ENCODE measurements at regions of chr17 and their contacts with region 1.

Region 1: DNA sequence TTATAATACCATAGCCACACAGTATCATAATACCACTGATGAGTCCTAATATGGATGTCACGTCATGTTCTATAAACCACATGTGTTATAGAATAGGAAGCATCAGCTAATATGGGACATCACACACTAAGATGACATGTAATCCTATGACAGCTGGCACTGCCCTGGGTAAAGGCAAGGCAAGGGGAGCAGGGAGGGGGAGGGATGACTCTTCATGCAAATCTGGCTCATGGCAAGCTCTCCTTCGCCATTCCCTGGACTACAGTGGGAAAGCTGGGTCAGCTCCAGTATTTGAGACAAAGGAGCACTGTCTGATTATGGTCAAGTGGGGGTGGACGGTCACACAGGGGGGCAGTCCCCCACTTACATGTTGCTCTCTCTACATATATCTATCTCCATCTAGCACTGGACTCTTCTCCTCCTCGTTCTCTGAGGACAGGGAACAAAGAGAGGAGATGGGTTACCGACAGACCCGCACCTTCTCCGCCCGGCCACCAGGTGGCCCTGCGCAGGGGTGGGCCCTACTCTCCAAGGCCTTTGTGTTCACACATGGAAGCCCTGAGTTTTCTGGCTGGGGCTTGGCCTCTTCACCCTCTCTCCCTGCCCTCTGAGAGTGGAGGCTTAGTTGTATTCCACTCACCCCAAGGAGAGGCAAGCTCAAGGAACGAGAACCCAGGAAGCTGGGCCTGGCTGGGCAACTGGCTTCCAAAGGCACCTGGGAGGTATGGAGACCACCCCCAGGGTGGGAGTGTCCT is 23.4 kb upstream of the MPO start:
- DNase-seq: peak; percentile 51
- H3K4me3 ChIP-seq: no peak overlapping the region
- H3K27ac ChIP-seq: no peak overlapping the region
- H3K4me1 ChIP-seq: no peaks in the 10 kb centered on the region
- H3K27me3 ChIP-seq: no peaks in the 10 kb centered on the region
- CTCF ChIP-seq: peak; percentile 64 to 74 (median 69)
- EP300 ChIP-seq: no peak
- POLR2A ChIP-seq: no peak

Region 2: DNA sequence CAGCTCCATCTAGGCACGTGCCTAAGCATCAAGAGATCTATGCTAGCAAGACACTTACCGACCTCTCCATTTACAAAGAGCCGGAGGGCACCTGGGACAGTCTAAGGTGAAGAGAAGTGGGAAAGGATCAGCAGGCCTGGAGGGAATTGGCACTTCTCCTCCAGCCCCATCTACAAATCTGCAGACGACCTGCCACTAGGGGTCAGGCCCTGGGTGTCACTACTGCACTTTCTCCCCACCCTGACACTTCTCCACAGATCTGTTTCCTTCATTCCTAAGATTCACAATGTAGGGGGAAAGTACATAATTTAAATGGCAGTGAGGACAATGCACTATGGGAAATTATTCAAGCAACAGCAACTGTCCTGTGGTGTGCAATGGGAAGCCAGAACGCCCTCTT is 93.2 kb before region 1 on chr17:
- in situ Hi-C with region 1: no loop called
- intact Hi-C with region 1: no loop called
- DNase-seq: no peak
- H3K4me3 ChIP-seq: no peak overlapping the region
- H3K27ac ChIP-seq: no peak overlapping the region
- H3K4me1 ChIP-seq: no peaks in the 10 kb centered on the region
- H3K27me3 ChIP-seq: no peaks in the 10 kb centered on the region
- CTCF ChIP-seq: no peak
- EP300 ChIP-seq: no peak
- POLR2A ChIP-seq: no peak

Region 3: DNA sequence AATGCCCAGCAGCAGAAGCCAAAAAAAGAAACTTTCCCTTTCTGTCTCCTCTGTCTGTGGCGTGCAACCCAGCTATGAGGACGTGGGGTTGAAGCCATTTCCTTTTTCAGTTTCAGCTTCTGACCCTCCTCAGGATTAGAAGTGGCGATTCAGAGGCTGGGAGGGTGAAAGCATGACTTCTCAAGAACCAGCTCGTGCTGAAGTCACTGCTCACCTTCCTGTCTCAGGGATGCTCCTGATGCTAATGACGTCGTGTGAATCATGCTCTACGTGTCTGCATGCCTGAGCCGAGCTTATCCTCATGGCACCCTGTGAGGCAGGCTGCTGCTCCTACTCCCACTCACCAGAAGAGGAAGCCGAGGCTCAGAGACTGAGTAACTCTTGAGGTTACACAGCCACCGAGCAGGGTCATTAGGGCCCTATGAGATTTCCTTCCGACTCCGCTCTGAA is 71.4 kb before region 1 on chr17:
- in situ Hi-C with region 1: no loop called
- intact Hi-C with region 1: no loop called
- DNase-seq: no peak
- H3K4me3 ChIP-seq: no peak overlapping the region
- H3K27ac ChIP-seq: no peak overlapping the region
- H3K4me1 ChIP-seq: no peaks in the 10 kb centered on the region
- H3K27me3 ChIP-seq: peaks cover 45% of the 10 kb centered on the region
- CTCF ChIP-seq: no peak
- EP300 ChIP-seq: no peak
- POLR2A ChIP-seq: no peak

Region 4: GRCh38 chr17:58254803-58255388 is 49.3 kb before region 1 on chr17:
- in situ Hi-C with region 1: no loop called
- intact Hi-C with region 1: loop called (anchors 1 kb)
- DNase-seq: no peak
- H3K4me3 ChIP-seq: no peak overlapping the region
- H3K27ac ChIP-seq: no peak overlapping the region
- H3K4me1 ChIP-seq: peaks cover under 1 to 1% (median 1%) of the 10 kb centered on the region in 4 donors
- H3K27me3 ChIP-seq: peaks cover 49% of the 10 kb centered on the region
- CTCF ChIP-seq: no peak
- EP300 ChIP-seq: no peak
- POLR2A ChIP-seq: no peak

Region 5: DNA sequence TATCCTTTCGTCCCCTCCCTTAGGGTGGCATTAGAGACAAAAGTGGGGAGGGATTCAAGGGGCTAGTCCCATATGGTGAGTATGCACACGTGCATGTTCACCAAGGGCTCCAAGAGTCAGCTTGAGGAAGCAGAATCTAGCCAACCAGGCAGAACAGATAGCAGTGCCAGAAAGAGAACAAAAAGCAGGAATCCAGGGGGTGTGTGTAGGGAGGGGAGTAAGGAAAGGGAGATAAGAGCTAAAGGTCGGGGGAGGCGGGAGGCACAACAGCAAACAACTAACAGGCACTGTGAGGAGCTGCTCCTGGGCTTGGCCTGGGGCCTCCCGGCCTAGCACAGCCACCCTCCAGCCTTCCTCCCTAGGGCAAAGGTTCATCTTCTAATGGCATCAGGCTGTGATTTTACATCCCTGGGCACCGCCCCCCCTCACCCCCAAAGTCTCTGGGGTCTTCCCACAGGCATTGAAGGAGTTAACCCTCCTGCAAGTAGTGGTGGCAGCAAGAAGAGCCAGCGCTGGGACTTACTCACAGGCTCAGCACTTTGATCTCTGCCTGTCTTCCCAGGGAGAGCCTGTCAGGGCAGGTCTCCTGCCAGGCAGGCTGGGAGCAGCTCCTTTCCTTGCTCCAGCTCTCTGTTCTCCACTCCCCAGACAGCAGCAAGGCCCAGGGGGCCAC is 60.3 kb after region 1 on chr17:
- in situ Hi-C with region 1: no loop called
- intact Hi-C with region 1: loop called (anchors 2 kb)
- DNase-seq: peak; percentile 65
- H3K4me3 ChIP-seq: no peak overlapping the region
- H3K27ac ChIP-seq: peak overlapping the region; percentile 82 to 91 (median 84)
- H3K4me1 ChIP-seq: peaks cover 12 to 53% (median 42%) of the 10 kb centered on the region in 4 donors
- H3K27me3 ChIP-seq: no peaks in the 10 kb centered on the region
- CTCF ChIP-seq: no peak
- EP300 ChIP-seq: no peak
- POLR2A ChIP-seq: no peak

Region 6: GRCh38 chr17:58377093-58377601 is 73.0 kb after region 1 on chr17:
- in situ Hi-C with region 1: no loop called
- intact Hi-C with region 1: no loop called
- DNase-seq: peak; percentile 64
- H3K4me3 ChIP-seq: no peak overlapping the region
- H3K27ac ChIP-seq: peak overlapping the region; percentile 60 to 75 (median 72)
- H3K4me1 ChIP-seq: peaks cover 6 to 67% (median 53%) of the 10 kb centered on the region in 4 donors
- H3K27me3 ChIP-seq: no peaks in the 10 kb centered on the region
- CTCF ChIP-seq: no peak
- EP300 ChIP-seq: no peak
- POLR2A ChIP-seq: no peak

Region 7: GRCh38 chr17:59266751-59267150 is 962.6 kb after region 1 on chr17:
- in situ Hi-C with region 1: no loop called
- intact Hi-C with region 1: no loop called
- DNase-seq: no peak
- H3K4me3 ChIP-seq: no peak overlapping the region
- H3K27ac ChIP-seq: no peak overlapping the region
- H3K4me1 ChIP-seq: no peaks in the 10 kb centered on the region
- H3K27me3 ChIP-seq: no peaks in the 10 kb centered on the region
- CTCF ChIP-seq: no peak
- EP300 ChIP-seq: no peak
- POLR2A ChIP-seq: no peak

Measured in transverse colon (tissue), 4 donors.